Gastrocnemius medialis (tissue), 4 donors: ENCODE measurements at regions of chr17 and their contacts with region 1.

Region 1: GRCh38 chr17:2244545-2245525 is 58.8 kb downstream of the SMG6 start:
- DNase-seq: peak; percentile 78 to 87
- ATAC-seq: peak; percentile 64 to 80
- H3K4me3 ChIP-seq: no peak overlapping the region
- H3K27ac ChIP-seq: peak overlapping the region; percentile 62 to 74 (median 65)
- H3K4me1 ChIP-seq: peaks cover 27% of the 10 kb centered on the region in 2 donors
- H3K27me3 ChIP-seq: no peaks in the 10 kb centered on the region
- CTCF ChIP-seq: peak; percentile 98 to 99 (median 99)
- POLR2A ChIP-seq: no peak

Region 2: DNA sequence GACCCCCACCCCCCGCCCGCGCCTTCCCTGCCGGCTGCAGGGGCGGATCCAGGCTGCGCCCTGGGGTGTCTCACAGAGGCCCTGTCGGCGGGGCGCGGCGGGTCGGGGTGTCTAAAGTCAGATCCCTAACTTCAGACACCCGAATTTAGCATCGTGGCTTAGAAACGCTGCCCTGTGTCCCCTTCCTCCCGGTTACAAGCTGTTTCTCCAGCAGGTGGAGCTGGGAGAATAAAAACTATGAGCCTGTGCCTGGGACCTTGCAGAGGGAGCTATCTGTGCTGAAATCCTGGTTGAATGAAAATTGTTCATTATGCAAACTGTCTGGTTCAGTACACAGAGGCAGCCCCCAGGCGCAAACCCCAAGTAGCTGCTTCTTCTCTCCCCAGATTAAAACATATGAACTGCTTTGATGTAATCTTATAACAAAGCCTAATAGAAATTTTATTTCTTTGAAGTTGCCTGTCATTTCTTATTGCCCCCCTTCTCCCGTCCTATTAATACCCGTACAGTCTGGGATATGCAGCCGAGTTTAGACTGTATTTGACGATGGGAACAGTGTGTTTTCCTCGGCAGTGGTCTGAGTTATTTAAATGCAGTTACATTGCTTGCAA is 336.0 kb before region 1 on chr17:
- in situ Hi-C with region 1: loop called in 3 of 4 experiments (anchors 25 kb)
- intact Hi-C with region 1: no loop called
- DNase-seq: peak; percentile 41 to 55
- ATAC-seq: peak; percentile 78 to 85
- H3K4me3 ChIP-seq: peak overlapping the region; percentile 18 to 46 (median 30)
- H3K27ac ChIP-seq: no peak overlapping the region
- H3K4me1 ChIP-seq: peaks cover 30 to 32% of the 10 kb centered on the region in 2 donors
- H3K27me3 ChIP-seq: peaks cover 6 to 13% (median 8%) of the 10 kb centered on the region in 3 donors
- CTCF ChIP-seq: peak; percentile 63 to 81 (median 76)
- POLR2A ChIP-seq: no peak

Region 3: GRCh38 chr17:2054512-2055291 is 190.1 kb before region 1 on chr17 and contains the start of gene HIC1:
- in situ Hi-C with region 1: loop called in 2 of 4 experiments (anchors 5 kb)
- intact Hi-C with region 1: loop called (anchors 1 kb)
- DNase-seq: peak; percentile 52 to 63
- ATAC-seq: peak; percentile 53 to 63
- H3K4me3 ChIP-seq: peak within 1 kb of the TSS; percentile 52 to 67 (median 64)
- H3K27ac ChIP-seq: peak within 1 kb of the TSS; percentile 70 to 82 (median 76)
- H3K4me1 ChIP-seq: peaks cover 0 to 28% of the 10 kb centered on the region in 2 donors
- H3K27me3 ChIP-seq: peaks cover 0 to 14% (median 0%) of the 10 kb centered on the region in 3 donors
- CTCF ChIP-seq: peak; percentile 78 to 99 (median 98)
- POLR2A ChIP-seq: peak; percentile 55 to 71
- total RNA-seq, gene HIC1: 4.6 to 9.6 (median 6.9) TPM

Region 4: DNA sequence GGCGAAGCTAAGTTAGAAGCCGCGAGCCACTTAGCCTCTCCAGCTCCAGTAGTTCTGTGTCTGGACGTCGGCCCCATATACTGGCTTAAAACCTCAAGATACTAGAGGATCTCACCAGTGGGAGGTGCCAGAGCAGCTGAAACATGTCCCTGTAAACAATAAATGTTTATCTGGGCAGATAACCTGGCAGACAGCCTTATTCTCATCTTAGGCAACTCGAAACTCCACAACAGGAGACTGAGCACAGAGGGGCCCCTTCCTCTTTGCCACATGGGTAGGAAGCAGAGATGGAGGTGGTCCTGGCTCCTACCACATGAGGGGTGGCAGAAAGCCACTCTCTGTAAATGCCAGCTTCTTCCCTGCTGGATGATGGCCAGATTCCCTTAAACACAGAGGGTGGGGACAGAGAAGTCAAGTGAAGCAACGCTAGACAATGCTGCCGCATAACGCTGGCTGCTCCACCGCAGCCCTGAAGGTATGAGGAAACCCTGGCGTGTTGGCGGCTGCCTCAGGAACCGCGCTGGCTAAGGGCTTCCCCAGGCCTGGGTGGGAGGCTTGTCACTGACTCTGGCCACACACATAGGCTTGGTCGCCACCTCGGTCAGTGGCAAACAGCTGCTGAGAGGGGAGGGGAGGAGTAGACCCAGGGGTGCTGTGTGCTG is 122.1 kb before region 1 on chr17:
- in situ Hi-C with region 1: no loop called
- intact Hi-C with region 1: loop called (anchors 2 kb)
- DNase-seq: peak; percentile 32 to 63
- ATAC-seq: peak; percentile 68 to 80
- H3K4me3 ChIP-seq: peak overlapping the region; percentile 13 to 24 (median 20)
- H3K27ac ChIP-seq: peak overlapping the region; percentile 67 to 80 (median 71)
- H3K4me1 ChIP-seq: peaks cover 27 to 29% of the 10 kb centered on the region in 2 donors
- H3K27me3 ChIP-seq: no peaks in the 10 kb centered on the region
- CTCF ChIP-seq: peak in 1 of 5 experiments; percentile 22
- POLR2A ChIP-seq: no peak

Region 5: GRCh38 chr17:2215616-2216364 is 29.0 kb before region 1 on chr17:
- in situ Hi-C with region 1: no loop called
- intact Hi-C with region 1: loop called (anchors 1 kb)
- DNase-seq: peak; percentile 68 to 74
- ATAC-seq: peak in 1 of 2 donors; percentile 31
- H3K4me3 ChIP-seq: peak overlapping the region; percentile 12 to 33 (median 18)
- H3K27ac ChIP-seq: peak overlapping the region; percentile 87 to 97 (median 90)
- H3K4me1 ChIP-seq: peaks cover 54 to 58% of the 10 kb centered on the region in 2 donors
- H3K27me3 ChIP-seq: no peaks in the 10 kb centered on the region
- CTCF ChIP-seq: no peak
- POLR2A ChIP-seq: no peak